Activated CD8-positive, alpha-beta T cell treated with anti-CD3 and anti-CD28 coated beads for 36 hours (primary cell): ENCODE measurements at regions of chr17 and their contacts with region 1.

Region 1: DNA sequence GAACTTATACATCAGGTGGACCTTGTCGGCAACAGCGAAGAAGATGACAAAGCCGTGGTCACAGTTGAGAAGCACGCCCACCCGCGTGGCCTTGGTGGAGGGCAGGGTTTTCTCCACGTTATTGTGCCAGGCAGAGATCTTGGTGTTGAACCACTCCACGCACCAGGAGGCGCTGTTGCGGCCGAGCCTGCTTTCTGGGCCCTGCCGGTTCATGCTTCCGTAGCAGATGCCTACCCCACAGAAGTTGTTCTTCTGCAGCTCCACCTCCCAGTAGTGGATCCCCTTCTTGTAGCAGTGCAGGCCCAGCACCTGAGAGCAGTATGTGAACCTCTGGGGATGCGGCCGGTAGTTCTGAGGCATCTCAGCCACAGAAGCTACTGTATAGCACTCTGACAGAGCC is 22.1 kb downstream of the TRIM25 start:
- DNase-seq: peak; percentile 66
- ATAC-seq: peak; percentile 76
- H3K4me3 Mint-ChIP-seq: no peak overlapping the region
- H3K27ac Mint-ChIP-seq: no peak overlapping the region
- H3K4me1 Mint-ChIP-seq: peaks cover 5% of the 10 kb centered on the region
- H3K27me3 Mint-ChIP-seq: no peaks in the 10 kb centered on the region
- CTCF ChIP-seq: peak; percentile 70

Region 2: GRCh38 chr17:56939901-56940343 is 48.1 kb after region 1 on chr17:
- CTCF ChIA-PET with region 1: interaction called, 17 read pairs
- POLR2A ChIA-PET with region 1: interaction called, 3 read pairs
- intact Hi-C with region 1: no loop called
- DNase-seq: no peak
- ATAC-seq: peak; percentile 61
- H3K4me3 Mint-ChIP-seq: no peak overlapping the region
- H3K27ac Mint-ChIP-seq: no peak overlapping the region
- H3K4me1 Mint-ChIP-seq: peaks cover 16% of the 10 kb centered on the region
- H3K27me3 Mint-ChIP-seq: no peaks in the 10 kb centered on the region
- CTCF ChIP-seq: peak; percentile 89